Mammary epithelial cell (primary cell): ENCODE measurements at regions of chr3 and their contacts with region 1.

Region 1: GRCh38 chr3:100710261-100710968 is 1.1 kb downstream of the TFG start:
- DNase-seq: peak; percentile 75
- H3K4me3 ChIP-seq: peak overlapping the region; percentile 83 to 98 (median 93)
- H3K27ac ChIP-seq: peak overlapping the region; percentile 89
- H3K4me1 ChIP-seq: peaks cover 31% of the 10 kb centered on the region
- H3K27me3 ChIP-seq: no peaks in the 10 kb centered on the region
- CTCF ChIP-seq: peak; percentile 30 to 58

Region 2: DNA sequence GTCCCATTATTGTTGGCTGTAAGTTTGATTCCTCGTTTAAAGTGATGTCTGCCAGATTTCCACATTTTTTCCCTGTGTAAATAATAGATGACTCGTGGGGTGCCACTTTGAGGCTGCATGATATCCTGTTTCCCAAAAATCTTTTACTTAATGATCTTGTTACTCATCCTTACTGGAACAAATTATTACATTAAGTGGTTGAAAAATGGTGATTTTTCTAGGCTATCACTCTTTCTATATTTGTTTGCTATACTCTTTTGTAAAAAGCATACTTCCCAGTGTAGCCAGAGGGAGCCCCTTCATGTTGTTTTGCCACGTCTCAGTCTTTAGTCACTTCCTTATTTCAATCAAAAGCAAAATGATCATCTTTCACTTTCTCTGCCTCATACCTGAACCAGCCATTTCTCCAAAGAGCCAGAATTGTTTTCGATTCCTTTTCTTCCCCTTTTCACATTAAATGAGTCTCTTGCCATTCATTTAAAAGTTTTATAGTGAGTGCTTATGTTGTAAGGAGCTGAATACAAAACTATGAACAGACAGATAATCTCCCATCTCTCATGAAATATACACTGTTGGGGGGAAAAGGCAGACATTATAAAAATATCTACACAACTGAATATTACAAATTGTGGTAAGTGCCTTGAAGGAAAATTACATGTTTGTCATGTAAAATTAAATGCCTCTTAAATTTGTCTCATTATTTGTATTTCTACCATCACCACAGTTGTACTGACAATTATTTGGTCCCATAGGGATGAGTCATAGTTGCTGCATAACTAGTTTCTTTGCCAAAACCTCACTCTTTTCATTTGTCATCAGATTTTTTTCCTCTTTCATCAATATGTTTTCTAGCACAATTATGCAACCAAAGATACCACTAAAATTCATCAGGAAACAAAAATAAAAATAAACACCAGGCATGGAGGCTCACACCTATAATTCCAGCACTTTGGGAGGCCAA is 59.5 kb before region 1 on chr3:
- CTCF ChIA-PET with region 1: no interaction called
- dilution Hi-C with region 1: no loop called
- in situ Hi-C with region 1: no loop called
- intact Hi-C with region 1: loop called (anchors 2 kb)
- DNase-seq: peak; percentile 72
- H3K4me3 ChIP-seq: peak overlapping the region in 1 of 3 experiments; percentile 13
- H3K27ac ChIP-seq: peak overlapping the region; percentile 36
- H3K4me1 ChIP-seq: peaks cover 3% of the 10 kb centered on the region
- H3K27me3 ChIP-seq: no peaks in the 10 kb centered on the region
- CTCF ChIP-seq: peak in 1 of 2 donors; percentile 38